Activated CD4-positive, alpha-beta memory T cell treated with anti-CD3 and anti-CD28 coated beads for 36 hours (primary cell): ENCODE measurements at regions of chr1 and their contacts with region 1.

Region 1: GRCh38 chr1:108691942-108692723 is at the start of gene PRPF38B:
- DNase-seq: peak; percentile 97
- H3K4me3 Mint-ChIP-seq: peak within 1 kb of the TSS; percentile 96
- H3K27ac Mint-ChIP-seq: peak within 1 kb of the TSS; percentile 99
- H3K4me1 Mint-ChIP-seq: peaks cover 37% of the 10 kb centered on the region
- H3K27me3 Mint-ChIP-seq: no peaks in the 10 kb centered on the region
- total RNA-seq, gene PRPF38B: 57.0 to 63.5 TPM

Region 2: GRCh38 chr1:108503076-108503740 is 188.9 kb before region 1 on chr1:
- CTCF ChIA-PET with region 1: no interaction called
- POLR2A ChIA-PET with region 1: no interaction called
- intact Hi-C with region 1: loop called (anchors 5 kb)
- DNase-seq: no peak
- H3K4me3 Mint-ChIP-seq: no peak overlapping the region
- H3K27ac Mint-ChIP-seq: no peak overlapping the region
- H3K4me1 Mint-ChIP-seq: peaks cover 1% of the 10 kb centered on the region
- H3K27me3 Mint-ChIP-seq: peaks cover 22% of the 10 kb centered on the region

Region 3: GRCh38 chr1:108584348-108584856 is 107.7 kb before region 1 on chr1:
- CTCF ChIA-PET with region 1: no interaction called
- POLR2A ChIA-PET with region 1: no interaction called
- intact Hi-C with region 1: no loop called
- DNase-seq: no peak
- H3K4me3 Mint-ChIP-seq: no peak overlapping the region
- H3K27ac Mint-ChIP-seq: no peak overlapping the region
- H3K4me1 Mint-ChIP-seq: peaks cover 35% of the 10 kb centered on the region
- H3K27me3 Mint-ChIP-seq: no peaks in the 10 kb centered on the region

Region 4: GRCh38 chr1:108708691-108709660 is 16.8 kb after region 1 on chr1:
- CTCF ChIA-PET with region 1: interaction called, 13 read pairs
- POLR2A ChIA-PET with region 1: interaction called, 39 read pairs
- intact Hi-C with region 1: loop called (anchors 2 kb)
- DNase-seq: peak; percentile 83
- H3K4me3 Mint-ChIP-seq: no peak overlapping the region
- H3K27ac Mint-ChIP-seq: no peak overlapping the region
- H3K4me1 Mint-ChIP-seq: peaks cover 28% of the 10 kb centered on the region
- H3K27me3 Mint-ChIP-seq: peaks cover 4% of the 10 kb centered on the region

Region 5: DNA sequence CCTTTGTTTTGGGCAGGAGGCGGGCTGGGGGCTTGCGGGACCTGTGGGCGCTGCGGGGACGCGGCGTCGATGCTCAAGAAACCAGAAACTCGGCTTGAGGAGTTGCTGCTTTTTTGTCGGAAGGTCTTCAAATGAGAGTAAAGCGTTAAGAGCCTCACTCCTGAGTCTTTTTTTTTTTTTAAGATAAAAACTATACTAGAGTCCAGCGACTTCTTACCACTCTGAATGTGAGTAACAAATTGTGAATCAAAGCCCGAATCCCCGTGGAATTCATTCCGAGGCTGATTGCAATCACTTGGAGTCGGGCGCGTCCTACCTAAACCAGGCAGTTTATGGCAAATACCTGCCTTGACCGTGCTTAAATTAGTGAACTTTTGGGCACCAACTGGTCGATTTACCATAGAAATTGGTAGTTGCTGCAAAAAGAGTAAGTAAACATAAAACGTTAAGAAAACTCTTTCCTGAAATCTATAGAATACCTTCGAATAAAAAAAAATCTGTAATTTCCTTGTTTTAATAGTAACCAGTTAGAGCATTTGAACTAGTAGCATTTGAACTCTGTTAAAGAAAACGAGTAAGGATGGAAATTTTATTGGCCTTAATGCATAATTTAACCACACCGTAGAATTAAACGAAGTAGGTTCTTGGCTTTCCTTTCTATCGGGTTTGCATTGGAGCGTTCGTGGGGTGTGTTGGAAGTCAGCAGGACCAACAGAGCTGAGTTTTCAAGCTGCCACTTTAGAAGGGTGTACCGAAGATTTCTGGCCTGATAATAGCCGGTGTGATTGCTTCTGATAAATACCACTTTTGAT is 185.4 kb after region 1 on chr1:
- CTCF ChIA-PET with region 1: no interaction called
- POLR2A ChIA-PET with region 1: no interaction called
- intact Hi-C with region 1: loop called (anchors 2 kb)
- DNase-seq: no peak
- H3K4me3 Mint-ChIP-seq: peak overlapping the region; percentile 90
- H3K27ac Mint-ChIP-seq: peak overlapping the region; percentile 33
- H3K4me1 Mint-ChIP-seq: peaks cover 15% of the 10 kb centered on the region
- H3K27me3 Mint-ChIP-seq: no peaks in the 10 kb centered on the region

Region 6: GRCh38 chr1:108963052-108963686 is 271.0 kb after region 1 on chr1 and contains the start of gene CLCC1:
- CTCF ChIA-PET with region 1: no interaction called
- POLR2A ChIA-PET with region 1: interaction called, 10 read pairs
- intact Hi-C with region 1: loop called (anchors 5 kb)
- DNase-seq: peak; percentile 96
- H3K4me3 Mint-ChIP-seq: peak within 1 kb of the TSS; percentile 82
- H3K27ac Mint-ChIP-seq: peak within 1 kb of the TSS; percentile 87
- H3K4me1 Mint-ChIP-seq: peaks cover 28% of the 10 kb centered on the region
- H3K27me3 Mint-ChIP-seq: peaks cover 2% of the 10 kb centered on the region
- total RNA-seq, gene CLCC1: 17.1 to 18.6 TPM